Heart right ventricle (tissue), 16 donors: ENCODE measurements at regions of chr2 and their contacts with region 1.

Region 1: GRCh38 chr2:127681288-127681804 is 6.0 kb upstream of the LIMS2 start:
- DNase-seq: peak; percentile 60 to 75
- ATAC-seq: peak; percentile 48 to 80 (median 69)
- H3K4me3 ChIP-seq: peak overlapping the region; percentile 36 to 61 (median 50)
- H3K27ac ChIP-seq: peak overlapping the region; percentile 51 to 86 (median 76)
- H3K4me1 ChIP-seq: peaks cover 11 to 76% (median 47%) of the 10 kb centered on the region in 9 donors
- H3K27me3 ChIP-seq: peaks cover 0 to 17% (median 0%) of the 10 kb centered on the region in 7 donors
- CTCF ChIP-seq: peak in 1 of 9 donors; percentile 14

Region 2: GRCh38 chr2:127604986-127605385 is 76.4 kb before region 1 on chr2:
- intact Hi-C with region 1: loop called in 2 of 10 experiments (anchors 5 kb)
- DNase-seq: no peak
- ATAC-seq: no peak
- H3K4me3 ChIP-seq: no peak overlapping the region
- H3K27ac ChIP-seq: no peak overlapping the region
- H3K4me1 ChIP-seq: no peaks in the 10 kb centered on the region
- H3K27me3 ChIP-seq: no peaks in the 10 kb centered on the region
- CTCF ChIP-seq: no peak

Region 3: DNA sequence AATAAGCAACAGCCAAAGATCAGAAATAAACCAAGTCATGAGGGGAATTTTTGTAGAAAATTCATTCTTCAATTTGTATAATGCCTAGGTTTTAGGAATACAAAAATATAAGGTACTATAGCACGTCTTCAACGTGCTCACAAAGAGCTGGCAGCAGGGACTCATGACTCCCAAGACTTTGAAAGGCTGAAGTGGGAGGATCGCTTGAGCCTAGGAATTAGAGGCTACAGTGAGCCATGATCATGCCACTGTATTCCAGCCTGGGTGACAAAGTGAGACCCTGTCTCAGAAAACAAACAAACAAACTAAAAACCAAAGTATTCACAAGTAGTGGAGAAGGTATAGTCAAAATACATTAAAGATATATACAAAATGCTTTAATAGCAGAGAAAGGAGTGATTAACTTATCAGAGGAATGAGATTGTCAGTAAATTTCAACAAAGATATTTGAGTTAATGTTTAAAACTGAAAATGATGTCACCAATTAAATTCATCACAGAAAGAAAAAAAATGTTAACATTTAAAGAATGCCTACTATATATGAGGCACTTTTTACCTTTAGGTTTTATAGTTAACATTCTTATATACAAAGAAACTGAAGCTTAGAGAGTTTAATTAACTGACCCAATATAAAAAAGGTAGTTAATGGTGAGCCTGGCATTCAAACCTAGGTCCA is 126.5 kb after region 1 on chr2:
- intact Hi-C with region 1: no loop called
- DNase-seq: no peak
- ATAC-seq: no peak
- H3K4me3 ChIP-seq: no peak overlapping the region
- H3K27ac ChIP-seq: no peak overlapping the region
- H3K4me1 ChIP-seq: peaks cover 4 to 68% (median 57%) of the 10 kb centered on the region in 9 donors
- H3K27me3 ChIP-seq: no peaks in the 10 kb centered on the region
- CTCF ChIP-seq: no peak

Region 4: DNA sequence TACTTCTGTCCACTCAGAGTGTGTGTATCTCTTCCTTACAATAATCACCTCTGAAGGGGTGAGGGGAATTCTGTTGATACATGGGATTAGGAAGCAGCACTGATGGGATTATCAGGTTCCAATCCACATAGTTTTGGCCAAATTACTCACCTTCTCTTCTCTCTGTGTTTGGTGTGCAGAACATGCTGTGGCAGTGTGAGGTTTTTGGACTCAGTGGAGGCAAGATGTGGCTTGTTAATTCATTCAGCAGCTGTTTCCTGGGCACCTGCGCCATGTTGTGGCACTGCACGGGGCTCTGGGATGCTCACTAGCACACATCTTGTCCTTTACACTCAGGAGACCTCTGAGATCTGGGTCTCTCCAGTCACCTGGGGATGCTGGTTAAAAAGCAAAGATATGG is 987.6 kb after region 1 on chr2:
- intact Hi-C with region 1: no loop called
- DNase-seq: no peak
- ATAC-seq: no peak
- H3K4me3 ChIP-seq: no peak overlapping the region
- H3K27ac ChIP-seq: no peak overlapping the region
- H3K4me1 ChIP-seq: no peaks in the 10 kb centered on the region
- H3K27me3 ChIP-seq: peaks cover 0 to 10% (median 0%) of the 10 kb centered on the region in 7 donors
- CTCF ChIP-seq: no peak